ENCODE measurements at regions of chr15 and their contacts with region 1.

Region 1: DNA sequence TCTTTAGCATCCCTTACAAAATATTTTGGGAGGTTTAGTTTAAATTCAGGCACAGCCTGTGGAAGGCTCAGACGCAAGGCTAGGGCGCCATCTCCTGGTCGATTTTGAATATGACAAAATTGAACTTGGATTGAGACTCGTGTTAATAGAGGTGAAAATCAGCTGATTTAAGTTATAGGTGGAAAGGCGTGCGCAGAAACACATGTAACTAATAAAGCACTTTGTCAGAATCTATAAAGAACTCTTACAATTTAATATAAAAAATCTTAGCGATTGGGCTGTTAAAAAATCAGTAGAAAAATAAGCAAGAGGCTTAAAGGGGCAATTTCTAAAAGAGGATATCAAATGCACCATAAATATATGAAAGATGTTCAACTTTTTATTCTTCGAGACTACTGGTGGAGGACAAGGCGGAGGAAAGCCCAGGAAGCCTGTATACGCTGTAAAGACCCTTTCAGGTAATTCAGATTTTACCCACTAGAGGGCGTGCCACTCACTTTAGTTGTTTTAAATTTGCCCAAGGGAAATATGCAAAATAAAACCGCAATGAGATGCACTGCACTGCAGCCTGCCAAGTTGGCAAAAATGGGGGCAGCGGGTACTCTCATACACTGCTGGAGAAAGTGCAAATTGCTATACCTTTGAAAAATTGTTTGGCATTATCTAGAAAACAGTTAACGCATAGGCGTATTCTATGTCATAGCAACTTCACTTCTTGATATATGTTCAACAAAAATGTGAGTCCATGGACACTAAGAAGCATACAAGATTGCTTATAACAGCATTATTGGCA is 64.7 kb downstream of the SLC30A4 start:
- DNase-seq: peak; percentile 90
- ATAC-seq: peak; percentile 57
- H3K4me3 Mint-ChIP-seq: peak overlapping the region; percentile 82
- H3K27ac Mint-ChIP-seq: peak overlapping the region; percentile 81
- H3K4me1 Mint-ChIP-seq: peaks cover 48% of the 10 kb centered on the region
- H3K27me3 Mint-ChIP-seq: no peaks in the 10 kb centered on the region

Region 2: DNA sequence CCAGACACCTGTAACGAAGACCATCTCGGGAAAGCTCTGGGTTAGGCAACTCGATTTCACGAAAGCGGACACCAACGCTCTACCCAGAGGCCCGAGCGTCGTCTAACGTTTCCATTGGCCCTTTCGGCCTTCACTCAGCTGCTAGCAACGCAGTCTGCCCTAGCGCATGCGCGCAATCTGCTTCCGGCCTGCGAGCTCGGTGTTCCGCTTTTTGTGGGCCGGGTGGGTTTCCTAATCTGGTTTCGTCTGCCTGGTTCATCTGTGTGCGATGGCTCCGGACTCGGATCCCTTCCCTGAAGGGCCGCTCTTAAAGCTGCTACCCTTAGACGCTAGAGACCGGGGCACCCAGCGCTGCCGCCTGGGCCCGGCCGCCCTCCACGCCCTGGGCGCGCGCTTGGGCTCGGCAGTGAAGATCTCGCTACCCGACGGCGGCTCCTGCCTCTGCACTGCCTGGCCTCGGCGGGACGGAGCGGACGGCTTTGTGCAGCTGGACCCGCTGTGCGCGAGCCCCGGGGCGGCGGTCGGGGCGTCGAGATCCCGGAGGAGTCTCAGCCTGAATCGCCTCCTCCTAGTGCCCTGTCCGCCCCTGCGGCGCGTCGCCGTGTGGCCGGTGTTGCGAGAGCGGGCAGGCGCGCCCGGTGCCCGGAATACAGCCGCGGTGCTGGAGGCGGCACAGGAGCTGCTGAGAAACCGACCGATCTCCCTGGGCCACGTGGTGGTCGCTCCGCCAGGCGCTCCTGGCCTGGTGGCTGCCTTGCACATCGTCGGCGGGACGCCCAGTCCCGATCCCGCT is 55.5 kb before region 1 on chr15:
- CTCF ChIA-PET with region 1: interaction called, 15 read pairs
- POLR2A ChIA-PET with region 1: interaction called, 3 read pairs
- DNase-seq: peak; percentile 98
- ATAC-seq: peak; percentile 96
- H3K4me3 Mint-ChIP-seq: peak overlapping the region; percentile 97
- H3K27ac Mint-ChIP-seq: peak overlapping the region; percentile 86
- H3K4me1 Mint-ChIP-seq: peaks cover 29% of the 10 kb centered on the region
- H3K27me3 Mint-ChIP-seq: no peaks in the 10 kb centered on the region

Region 3: DNA sequence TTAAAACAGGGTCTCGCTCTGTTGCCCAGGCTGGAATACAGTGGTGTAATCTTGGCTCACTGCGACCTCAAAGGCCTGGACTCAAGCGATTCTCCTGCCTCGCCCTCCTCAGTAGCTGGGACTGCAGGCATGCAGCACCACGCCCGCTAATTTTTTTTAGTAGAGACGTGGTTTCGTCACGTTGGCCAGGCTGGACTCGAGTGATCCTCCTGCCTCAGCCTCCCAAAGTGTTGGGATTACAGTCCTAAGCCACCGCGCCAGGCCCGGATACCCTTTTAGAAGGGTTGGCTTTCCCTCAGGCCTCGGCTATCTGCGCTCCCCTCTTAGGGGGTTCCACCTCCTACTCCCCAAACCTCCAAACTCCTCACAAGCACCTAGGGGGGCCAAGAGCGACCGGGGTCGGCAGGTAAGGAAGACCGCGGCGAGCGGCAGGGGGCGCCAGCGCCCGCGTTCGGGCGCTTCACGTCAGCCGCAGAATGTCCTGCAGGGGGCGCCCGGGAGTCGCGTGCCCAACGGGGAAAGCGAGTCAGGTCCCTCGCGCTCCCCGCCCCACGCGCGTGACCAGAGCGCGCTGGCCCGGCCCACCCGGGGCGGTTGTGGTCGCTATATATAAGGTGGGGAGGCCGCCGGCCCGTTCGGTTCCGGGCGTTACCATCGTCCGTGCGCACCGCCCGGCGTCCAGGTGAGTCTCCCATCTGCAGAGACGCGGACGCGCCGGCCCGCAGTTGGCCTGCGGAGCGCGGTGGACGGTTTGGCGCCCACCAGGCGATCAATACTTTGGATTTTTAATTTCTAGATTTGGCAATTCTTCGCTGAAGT is 27.7 kb before region 1 on chr15:
- CTCF ChIA-PET with region 1: interaction called, 202 read pairs
- POLR2A ChIA-PET with region 1: no interaction called
- DNase-seq: peak; percentile 89
- ATAC-seq: peak; percentile 94
- H3K4me3 Mint-ChIP-seq: peak overlapping the region; percentile 57
- H3K27ac Mint-ChIP-seq: no peak overlapping the region
- H3K4me1 Mint-ChIP-seq: peaks cover 10% of the 10 kb centered on the region
- H3K27me3 Mint-ChIP-seq: peaks cover 28% of the 10 kb centered on the region

Region 4: DNA sequence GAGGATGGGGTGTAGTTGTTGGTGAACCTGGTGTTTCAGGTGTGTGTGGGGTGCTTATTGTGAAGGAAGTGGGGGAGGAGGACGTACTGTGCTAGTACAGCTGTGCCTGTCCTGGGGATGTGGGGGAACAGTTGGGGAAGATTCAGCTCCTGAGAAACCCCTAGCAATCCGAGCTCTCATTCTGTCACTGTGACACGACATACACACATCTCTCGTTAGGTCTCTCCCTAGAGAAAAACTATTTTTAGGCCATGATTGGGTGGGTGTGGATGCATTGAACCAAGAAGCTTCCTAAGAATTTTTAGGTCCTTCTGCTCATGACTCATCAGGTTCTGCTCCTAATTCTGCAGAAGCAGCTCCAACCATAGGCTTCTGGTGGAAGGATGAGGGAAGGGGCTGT is 10.5 kb after region 1 on chr15:
- CTCF ChIA-PET with region 1: interaction called, 14 read pairs
- POLR2A ChIA-PET with region 1: no interaction called
- DNase-seq: peak; percentile 3
- ATAC-seq: no peak
- H3K4me3 Mint-ChIP-seq: no peak overlapping the region
- H3K27ac Mint-ChIP-seq: no peak overlapping the region
- H3K4me1 Mint-ChIP-seq: no peaks in the 10 kb centered on the region
- H3K27me3 Mint-ChIP-seq: peaks cover 19% of the 10 kb centered on the region

Region 5: GRCh38 chr15:45549541-45550220 is 91.8 kb after region 1 on chr15:
- CTCF ChIA-PET with region 1: no interaction called
- POLR2A ChIA-PET with region 1: no interaction called
- DNase-seq: no peak
- ATAC-seq: no peak
- H3K4me3 Mint-ChIP-seq: no peak overlapping the region
- H3K27ac Mint-ChIP-seq: no peak overlapping the region
- H3K4me1 Mint-ChIP-seq: no peaks in the 10 kb centered on the region
- H3K27me3 Mint-ChIP-seq: peaks cover 6% of the 10 kb centered on the region

Region 6: GRCh38 chr15:45594319-45594718 is 136.5 kb after region 1 on chr15:
- CTCF ChIA-PET with region 1: interaction called, 54 read pairs
- POLR2A ChIA-PET with region 1: no interaction called
- DNase-seq: no peak
- ATAC-seq: no peak
- H3K4me3 Mint-ChIP-seq: no peak overlapping the region
- H3K27ac Mint-ChIP-seq: no peak overlapping the region
- H3K4me1 Mint-ChIP-seq: peaks cover 23% of the 10 kb centered on the region
- H3K27me3 Mint-ChIP-seq: no peaks in the 10 kb centered on the region

Region 7: GRCh38 chr15:45616901-45617323 is 159.1 kb after region 1 on chr15:
- CTCF ChIA-PET with region 1: interaction called, 130 read pairs
- POLR2A ChIA-PET with region 1: no interaction called
- DNase-seq: peak; percentile 22
- ATAC-seq: peak; percentile 44
- H3K4me3 Mint-ChIP-seq: no peak overlapping the region
- H3K27ac Mint-ChIP-seq: no peak overlapping the region
- H3K4me1 Mint-ChIP-seq: peaks cover 5% of the 10 kb centered on the region
- H3K27me3 Mint-ChIP-seq: no peaks in the 10 kb centered on the region